Posterior vena cava (tissue), 2 donors: ENCODE measurements at regions of chr13 and their contacts with region 1.

Region 1: DNA sequence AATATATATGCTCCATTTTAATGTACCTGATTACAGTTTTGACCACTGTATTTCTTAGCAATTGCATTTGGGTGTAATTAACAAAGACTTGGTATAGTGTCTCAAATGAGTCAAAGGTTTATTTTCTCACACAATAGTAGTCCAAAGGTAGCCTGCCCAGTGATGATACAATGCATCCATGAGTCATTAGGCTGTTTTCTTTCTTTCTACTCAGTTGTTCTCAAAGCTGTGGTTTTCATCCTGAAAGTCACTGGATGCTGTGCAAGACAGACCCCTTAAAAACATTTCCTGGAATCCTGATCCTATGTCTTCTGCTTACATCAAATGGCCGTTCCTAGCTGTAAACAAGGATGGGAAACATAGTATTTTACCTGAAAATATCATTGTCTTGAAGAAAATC is 651.2 kb upstream of the MIR17HG start:
- DNase-seq: no peak

Region 2: GRCh38 chr13:90713441-90714133 is 17.3 kb after region 1 on chr13:
- intact Hi-C with region 1: loop called in 1 of 2 experiments (anchors 2 kb)
- DNase-seq: no peak